ENCODE measurements at regions of chr6 and their contacts with region 1.

Region 1: GRCh38 chr6:134097114-134097707 is 44.8 kb upstream of the SLC2A12 start:
- H3K4me3 ChIP-seq: no peak overlapping the region
- H3K27ac ChIP-seq: no peak overlapping the region
- H3K4me1 ChIP-seq: no peaks in the 10 kb centered on the region
- CTCF ChIP-seq: peak; percentile 32; the same call in 1 of the 2 replicates

Region 2: DNA sequence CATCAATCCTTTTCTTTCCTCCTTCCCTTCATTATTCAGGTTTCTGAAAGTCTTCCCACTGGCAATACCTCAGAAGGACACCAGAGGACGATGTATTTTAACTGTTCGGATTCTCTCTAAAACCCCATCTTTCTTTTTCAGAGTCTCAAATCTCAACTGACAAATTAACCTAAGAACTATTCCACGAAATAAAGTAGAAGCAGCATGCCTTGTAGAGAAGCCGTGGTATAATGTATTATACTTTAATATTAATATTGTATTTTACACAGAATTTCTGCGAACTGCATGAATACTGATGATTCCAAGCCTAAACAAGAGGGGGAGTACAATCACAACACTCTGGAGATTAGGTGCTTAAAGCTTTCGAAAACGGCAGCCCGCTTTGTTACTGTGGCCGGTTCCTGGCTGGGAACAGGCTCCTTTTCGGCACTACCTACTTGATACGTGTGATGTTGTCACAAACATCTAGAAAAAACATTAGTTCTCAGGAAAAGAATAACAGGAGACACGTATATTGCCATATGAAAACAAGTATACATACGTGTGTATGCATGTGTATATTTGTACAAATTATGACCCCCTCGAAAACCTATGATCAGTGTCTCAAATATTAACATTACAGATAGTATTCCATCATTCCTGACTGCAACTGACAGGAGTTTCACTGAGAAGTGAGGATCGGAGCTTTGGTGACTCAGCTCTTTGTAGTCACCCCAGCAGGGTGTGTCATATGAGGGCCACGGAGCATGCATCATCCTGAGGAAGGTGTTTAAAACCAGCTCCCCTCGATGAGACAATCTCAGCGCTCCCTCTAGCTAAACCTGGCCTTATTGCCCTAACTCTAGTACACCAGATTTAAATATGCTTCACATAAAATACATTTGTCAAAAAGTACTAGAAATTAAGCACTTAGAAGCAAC is 528.0 kb before region 1 on chr6:
- CTCF ChIA-PET with region 1: interaction called, 23 read pairs
- POLR2A ChIA-PET with region 1: interaction called, 4 read pairs
- H3K4me3 ChIP-seq: peak overlapping the region; percentile 49
- H3K27ac ChIP-seq: no peak overlapping the region; the same call in 1 of the 2 replicates
- H3K4me1 ChIP-seq: no peaks in the 10 kb centered on the region
- CTCF ChIP-seq: peak; percentile 79

Region 3: DNA sequence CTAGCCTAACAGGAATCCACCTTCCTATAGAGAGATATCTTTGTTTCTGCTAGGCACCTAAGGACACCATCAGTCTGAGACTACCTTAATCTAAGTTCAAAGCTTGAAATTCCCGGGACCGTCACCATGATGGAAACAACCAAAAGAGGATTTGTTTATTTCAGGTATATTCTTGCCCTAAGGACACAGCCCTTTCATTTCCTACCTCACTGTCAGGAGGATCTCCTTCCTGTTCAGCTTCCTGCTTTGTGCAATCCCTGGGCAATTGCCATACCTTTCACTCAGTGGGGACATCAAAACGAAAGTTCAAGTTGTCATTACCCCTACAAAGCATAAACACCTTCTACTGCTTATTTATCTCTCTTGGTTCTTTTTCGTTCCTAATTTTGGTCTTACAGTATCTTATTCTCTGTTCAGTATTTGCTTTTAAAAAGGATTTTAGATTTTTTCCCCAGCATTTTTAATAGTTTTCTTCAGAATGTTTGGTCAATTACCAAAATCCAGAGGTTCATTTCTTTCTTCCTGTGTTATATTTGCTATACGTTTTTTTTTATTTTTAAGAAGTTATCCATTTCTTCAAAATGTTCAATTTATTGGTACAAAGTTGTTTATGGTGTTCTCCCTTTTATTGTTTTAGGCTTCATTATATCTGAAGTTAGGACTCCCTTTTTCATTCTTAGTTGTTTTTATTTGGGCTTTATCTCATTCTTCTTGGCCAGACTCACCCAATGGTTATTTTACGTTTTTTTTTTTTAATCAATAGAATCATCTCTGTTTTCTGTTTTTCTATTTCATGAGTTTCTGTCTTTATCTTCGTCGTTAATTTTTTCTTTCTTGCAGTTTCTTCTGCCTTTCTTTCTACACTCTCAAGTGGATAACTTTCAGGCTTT is 157.2 kb before region 1 on chr6:
- CTCF ChIA-PET with region 1: interaction called, 20 read pairs
- POLR2A ChIA-PET with region 1: no interaction called
- H3K4me3 ChIP-seq: no peak overlapping the region
- H3K27ac ChIP-seq: no peak overlapping the region
- H3K4me1 ChIP-seq: no peaks in the 10 kb centered on the region
- CTCF ChIP-seq: no peak

Region 4: GRCh38 chr6:133973109-133973971 is 123.9 kb before region 1 on chr6:
- CTCF ChIA-PET with region 1: interaction called, 94 read pairs
- POLR2A ChIA-PET with region 1: no interaction called
- H3K4me3 ChIP-seq: no peak overlapping the region
- H3K27ac ChIP-seq: 0 out of 2 replicates have a peak overlapping the region, but pooled peaks have one; percentile 13
- H3K4me1 ChIP-seq: peaks cover 21% of the 10 kb centered on the region
- CTCF ChIP-seq: peak; percentile 47; the same call in 1 of the 2 replicates

Region 5: DNA sequence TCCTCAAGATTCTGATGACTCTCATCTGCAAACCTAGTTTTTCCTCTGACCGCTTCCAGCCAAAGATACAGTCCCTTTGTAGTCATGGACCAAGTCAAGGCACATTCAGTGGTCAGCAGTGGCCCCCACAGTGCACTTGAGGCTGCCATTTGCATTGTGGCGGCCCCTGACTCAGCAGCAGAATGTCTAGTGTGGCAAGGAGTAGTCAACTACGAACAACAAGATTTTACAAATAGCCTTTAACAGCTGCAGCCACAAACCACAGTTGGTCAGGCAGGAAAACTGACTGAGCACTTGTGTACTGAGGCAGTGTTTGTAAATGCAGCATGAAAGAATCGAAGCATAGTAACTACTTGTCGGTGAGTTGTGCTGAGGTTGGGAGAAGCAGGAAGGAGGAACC is 94.4 kb before region 1 on chr6:
- CTCF ChIA-PET with region 1: interaction called, 11 read pairs
- POLR2A ChIA-PET with region 1: no interaction called
- H3K4me3 ChIP-seq: no peak overlapping the region
- H3K27ac ChIP-seq: no peak overlapping the region
- H3K4me1 ChIP-seq: no peaks in the 10 kb centered on the region
- CTCF ChIP-seq: no peak

Region 6: DNA sequence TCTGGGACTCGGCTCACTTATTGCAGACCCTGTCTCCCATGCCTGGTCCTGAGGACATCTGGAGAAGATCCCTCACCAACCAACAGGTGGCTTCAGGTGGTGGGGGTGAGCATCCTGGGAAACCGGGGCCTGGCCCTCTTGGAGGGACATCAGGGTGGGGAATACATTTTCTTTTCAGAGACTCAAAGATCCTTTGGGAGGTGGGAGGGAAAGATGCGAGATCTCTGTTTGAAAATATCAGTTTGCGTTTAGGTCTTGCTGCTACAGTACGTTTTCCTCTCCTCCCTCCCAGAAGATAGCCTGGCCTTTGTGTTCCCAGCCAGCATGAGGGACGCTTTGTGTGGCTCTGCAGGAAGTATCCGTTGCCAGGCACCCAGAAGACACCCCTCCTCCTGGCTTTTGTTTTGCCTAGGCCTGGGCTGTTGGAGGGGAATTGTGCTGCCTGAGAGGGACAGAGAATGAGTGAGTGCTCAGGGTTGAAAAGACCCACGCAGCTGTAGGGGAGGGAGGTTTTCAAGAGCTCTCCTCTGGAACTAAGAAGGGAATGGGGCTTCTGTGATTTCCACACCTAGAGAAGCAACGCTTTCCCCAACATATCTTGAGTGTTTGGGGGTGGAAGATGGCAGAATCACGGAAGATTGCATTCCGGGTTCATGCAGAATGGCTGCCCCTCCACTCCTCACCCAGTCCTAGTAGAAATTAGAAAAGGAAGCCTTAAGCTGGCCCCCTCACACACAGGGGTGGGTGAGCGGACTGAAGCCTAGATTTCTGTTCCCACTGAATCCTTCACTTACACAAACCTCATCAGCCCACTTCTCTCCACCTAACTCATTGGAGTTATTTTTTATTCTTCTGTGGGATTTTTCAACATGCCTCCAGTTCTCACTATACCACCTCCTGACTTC is 22.8 kb before region 1 on chr6:
- CTCF ChIA-PET with region 1: interaction called, 15 read pairs
- POLR2A ChIA-PET with region 1: no interaction called
- H3K4me3 ChIP-seq: no peak overlapping the region
- H3K27ac ChIP-seq: no peak overlapping the region
- H3K4me1 ChIP-seq: peaks cover under 1% of the 10 kb centered on the region; the same call in 1 of the 2 replicates
- CTCF ChIP-seq: no peak

Region 7: GRCh38 chr6:134123666-134124208 is 26.5 kb after region 1 on chr6:
- CTCF ChIA-PET with region 1: interaction called, 17 read pairs
- POLR2A ChIA-PET with region 1: no interaction called
- H3K4me3 ChIP-seq: no peak overlapping the region
- H3K27ac ChIP-seq: no peak overlapping the region
- H3K4me1 ChIP-seq: no peaks in the 10 kb centered on the region
- CTCF ChIP-seq: peak; percentile 17

Region 8: GRCh38 chr6:134182528-134182927 is 85.3 kb after region 1 on chr6:
- CTCF ChIA-PET with region 1: no interaction called
- POLR2A ChIA-PET with region 1: no interaction called
- H3K4me3 ChIP-seq: no peak overlapping the region
- H3K27ac ChIP-seq: no peak overlapping the region
- H3K4me1 ChIP-seq: peaks cover 4% of the 10 kb centered on the region; the same call in 1 of the 2 replicates
- CTCF ChIP-seq: no peak

Region 9: GRCh38 chr6:134230087-134230700 is 133.0 kb after region 1 on chr6:
- CTCF ChIA-PET with region 1: no interaction called
- POLR2A ChIA-PET with region 1: no interaction called
- H3K4me3 ChIP-seq: no peak overlapping the region
- H3K27ac ChIP-seq: no peak overlapping the region
- H3K4me1 ChIP-seq: no peaks in the 10 kb centered on the region
- CTCF ChIP-seq: no peak

Region 10: GRCh38 chr6:134345772-134346171 is 248.6 kb after region 1 on chr6:
- CTCF ChIA-PET with region 1: no interaction called
- POLR2A ChIA-PET with region 1: no interaction called
- H3K4me3 ChIP-seq: no peak overlapping the region
- H3K27ac ChIP-seq: no peak overlapping the region
- H3K4me1 ChIP-seq: peaks cover 2% of the 10 kb centered on the region; the same call in 1 of the 2 replicates
- CTCF ChIP-seq: no peak

Region 11: DNA sequence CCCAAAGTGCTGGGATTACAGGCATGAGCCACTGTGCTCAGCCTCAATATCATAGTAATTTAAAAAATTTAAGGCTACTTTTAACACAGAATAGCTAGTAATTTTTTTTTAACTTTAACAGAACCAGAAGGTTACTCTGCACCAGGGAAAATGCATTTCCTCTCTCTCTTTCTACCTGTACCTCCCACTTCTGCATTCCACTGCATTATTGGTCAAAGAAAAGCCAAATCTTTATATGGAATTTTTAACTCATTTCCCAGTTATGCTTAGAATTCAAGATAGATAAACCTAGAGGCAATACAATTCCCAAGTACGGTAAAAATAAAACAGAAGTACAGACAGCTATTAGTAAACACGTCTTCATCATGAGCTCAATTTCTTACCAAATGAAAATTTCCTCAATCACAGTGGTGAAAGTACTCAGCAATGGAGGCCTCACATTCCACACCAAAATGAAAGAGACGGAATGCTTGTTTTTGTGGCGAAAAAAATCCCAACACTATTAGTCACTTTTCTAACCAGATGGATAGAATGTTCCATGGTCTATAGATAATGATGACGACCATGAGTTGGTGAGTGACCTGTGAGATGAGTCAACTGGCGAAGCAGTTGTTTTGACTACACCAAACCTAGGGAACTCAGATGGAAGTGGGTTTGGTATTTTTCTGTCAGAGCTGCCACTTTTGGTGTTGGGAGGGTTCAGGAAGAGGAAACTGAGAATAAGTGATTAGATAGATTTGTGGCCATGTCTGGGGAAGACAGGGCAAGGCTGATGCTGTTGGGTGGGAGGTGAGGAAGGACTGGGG is 325.4 kb after region 1 on chr6:
- CTCF ChIA-PET with region 1: no interaction called
- POLR2A ChIA-PET with region 1: no interaction called
- H3K4me3 ChIP-seq: no peak overlapping the region
- H3K27ac ChIP-seq: no peak overlapping the region
- H3K4me1 ChIP-seq: no peaks in the 10 kb centered on the region
- CTCF ChIP-seq: no peak

Measured in HEK293 (cell line).